Breast epithelium (tissue), 4 donors: ENCODE measurements at regions of chr6 and their contacts with region 1.

Region 1: GRCh38 chr6:54737247-54737646 is 109.3 kb upstream of the FAM83B start:
- DNase-seq: no peak
- H3K4me3 ChIP-seq: no peak overlapping the region
- H3K27ac ChIP-seq: no peak overlapping the region
- H3K4me1 ChIP-seq: no peaks in the 10 kb centered on the region
- H3K27me3 ChIP-seq: no peaks in the 10 kb centered on the region
- CTCF ChIP-seq: no peak
- POLR2A ChIP-seq: no peak

Region 2: DNA sequence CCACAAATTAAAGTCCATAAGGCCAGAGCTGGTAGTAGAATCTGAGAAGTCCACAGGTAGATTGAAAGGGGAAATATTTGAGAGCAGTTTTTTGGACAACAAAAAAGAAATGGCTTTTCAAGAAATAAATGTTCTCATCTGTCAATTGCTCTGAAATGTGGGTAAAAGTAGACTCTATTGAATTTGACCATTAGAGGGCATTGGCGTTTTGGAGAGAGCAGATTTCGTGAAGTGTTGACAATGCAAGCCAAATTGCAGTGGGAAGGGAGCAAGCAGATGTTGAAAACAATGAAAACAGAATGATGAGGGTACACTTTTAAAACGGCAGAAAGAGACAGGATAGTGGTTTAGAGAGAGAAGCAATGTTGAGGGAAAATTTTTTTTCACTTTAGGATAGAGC is 39.8 kb before region 1 on chr6:
- intact Hi-C with region 1: no loop called
- DNase-seq: no peak
- H3K4me3 ChIP-seq: no peak overlapping the region
- H3K27ac ChIP-seq: no peak overlapping the region
- H3K4me1 ChIP-seq: no peaks in the 10 kb centered on the region
- H3K27me3 ChIP-seq: no peaks in the 10 kb centered on the region
- CTCF ChIP-seq: peak in 1 of 3 donors; percentile 9
- POLR2A ChIP-seq: no peak

Region 3: GRCh38 chr6:54768494-54768893 is 31.2 kb after region 1 on chr6:
- intact Hi-C with region 1: loop called (anchors 2 kb)
- DNase-seq: no peak
- H3K4me3 ChIP-seq: no peak overlapping the region
- H3K27ac ChIP-seq: no peak overlapping the region
- H3K4me1 ChIP-seq: no peaks in the 10 kb centered on the region
- H3K27me3 ChIP-seq: no peaks in the 10 kb centered on the region
- CTCF ChIP-seq: no peak
- POLR2A ChIP-seq: no peak